Activated CD8-positive, alpha-beta T cell treated with anti-CD3 and anti-CD28 coated beads for 36 hours (primary cell): ENCODE measurements at regions of chr12 and their contacts with region 1.

Region 1: DNA sequence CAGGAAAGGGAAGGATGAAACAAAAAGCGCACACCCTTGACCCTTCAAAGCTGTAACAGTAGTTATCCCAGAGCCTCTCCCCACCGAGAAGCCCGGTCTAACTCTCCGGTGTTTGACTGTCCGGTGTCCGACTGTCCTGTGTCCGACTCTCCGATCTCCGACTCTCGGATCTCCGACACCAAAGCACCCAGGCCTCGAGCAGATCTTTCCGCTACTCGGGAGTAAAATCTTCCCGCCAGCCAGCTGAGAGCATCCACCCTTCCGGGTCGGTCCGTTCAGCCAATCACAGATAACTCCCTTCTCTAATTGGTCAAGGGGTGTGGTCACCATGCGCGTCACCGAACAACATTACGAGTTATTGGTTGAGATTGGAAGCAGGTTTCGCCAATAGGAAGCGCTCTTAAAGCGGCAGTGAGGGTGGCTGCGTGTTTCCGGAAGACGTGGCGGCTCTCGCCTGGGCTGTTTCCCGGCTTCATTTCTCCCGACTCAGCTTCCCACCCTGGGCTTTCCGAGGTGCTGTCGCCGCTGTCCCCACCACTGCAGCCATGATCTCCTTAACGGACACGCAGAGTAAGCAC is at the starts of genes GOLT1B and RECQL:
- DNase-seq: peak; percentile 96
- ATAC-seq: peak; percentile 92
- H3K4me3 Mint-ChIP-seq: no peak within 1 kb of the TSS
- H3K27ac Mint-ChIP-seq: no peak within 1 kb of the TSS
- H3K4me1 Mint-ChIP-seq: peaks cover 57% of the 10 kb centered on the region
- H3K27me3 Mint-ChIP-seq: no peaks in the 10 kb centered on the region
- CTCF ChIP-seq: no peak
- total RNA-seq, gene GOLT1B: 31.6 to 35.9 TPM
- total RNA-seq, gene RECQL: 81.0 to 87.9 TPM

Region 2: GRCh38 chr12:21296751-21297406 is 204.6 kb before region 1 on chr12:
- CTCF ChIA-PET with region 1: no interaction called
- POLR2A ChIA-PET with region 1: no interaction called
- intact Hi-C with region 1: no loop called
- DNase-seq: peak; percentile 4
- ATAC-seq: peak; percentile 30
- H3K4me3 Mint-ChIP-seq: no peak overlapping the region
- H3K27ac Mint-ChIP-seq: no peak overlapping the region
- H3K4me1 Mint-ChIP-seq: peaks cover 2% of the 10 kb centered on the region
- H3K27me3 Mint-ChIP-seq: peaks cover 5% of the 10 kb centered on the region
- CTCF ChIP-seq: peak; percentile 89

Region 3: DNA sequence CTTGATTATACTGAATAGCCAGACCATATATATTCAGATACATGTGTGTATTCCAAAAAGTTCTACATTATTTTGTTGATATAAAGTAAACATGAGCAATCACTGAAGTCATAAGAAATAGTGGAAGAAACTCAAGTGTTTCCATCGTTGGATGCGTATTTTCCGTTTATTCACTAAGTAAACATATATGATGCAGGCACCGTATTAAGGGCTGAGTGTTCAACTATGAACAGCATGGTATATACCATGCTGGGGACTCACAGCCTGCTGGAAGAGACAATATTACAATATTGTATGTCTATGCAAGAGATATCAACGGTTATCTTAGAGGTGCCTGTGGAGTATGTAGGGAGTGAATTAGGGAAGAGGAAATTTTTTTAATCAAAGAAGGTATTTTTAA is 62.8 kb before region 1 on chr12:
- CTCF ChIA-PET with region 1: no interaction called
- POLR2A ChIA-PET with region 1: interaction called, 7 read pairs
- intact Hi-C with region 1: loop called (anchors 5 kb)
- DNase-seq: no peak
- ATAC-seq: no peak
- H3K4me3 Mint-ChIP-seq: peak overlapping the region; percentile 91
- H3K27ac Mint-ChIP-seq: peak overlapping the region; percentile 97
- H3K4me1 Mint-ChIP-seq: peaks cover 35% of the 10 kb centered on the region
- H3K27me3 Mint-ChIP-seq: no peaks in the 10 kb centered on the region
- CTCF ChIP-seq: no peak

Region 4: GRCh38 chr12:21451529-21451928 is 49.9 kb before region 1 on chr12:
- CTCF ChIA-PET with region 1: no interaction called
- POLR2A ChIA-PET with region 1: interaction called, 4 read pairs
- intact Hi-C with region 1: loop called (anchors 5 kb)
- DNase-seq: no peak
- ATAC-seq: no peak
- H3K4me3 Mint-ChIP-seq: no peak overlapping the region
- H3K27ac Mint-ChIP-seq: no peak overlapping the region
- H3K4me1 Mint-ChIP-seq: peaks cover 30% of the 10 kb centered on the region
- H3K27me3 Mint-ChIP-seq: no peaks in the 10 kb centered on the region
- CTCF ChIP-seq: no peak

Region 5: GRCh38 chr12:21527451-21528180 is 26.1 kb after region 1 on chr12:
- CTCF ChIA-PET with region 1: no interaction called
- POLR2A ChIA-PET with region 1: interaction called, 10 read pairs
- intact Hi-C with region 1: no loop called
- DNase-seq: peak; percentile 73
- ATAC-seq: peak; percentile 98
- H3K4me3 Mint-ChIP-seq: peak overlapping the region; percentile 70
- H3K27ac Mint-ChIP-seq: no peak overlapping the region
- H3K4me1 Mint-ChIP-seq: peaks cover 6% of the 10 kb centered on the region
- H3K27me3 Mint-ChIP-seq: peaks cover 29% of the 10 kb centered on the region
- CTCF ChIP-seq: no peak

Region 6: GRCh38 chr12:21657326-21658077 is 156.0 kb after region 1 on chr12 and contains the start of gene LDHB:
- CTCF ChIA-PET with region 1: no interaction called
- POLR2A ChIA-PET with region 1: interaction called, 22 read pairs
- intact Hi-C with region 1: loop called (anchors 5 kb)
- DNase-seq: peak; percentile 99
- ATAC-seq: peak; percentile 97
- H3K4me3 Mint-ChIP-seq: peak within 1 kb of the TSS; percentile 81
- H3K27ac Mint-ChIP-seq: peak within 1 kb of the TSS; percentile 98
- H3K4me1 Mint-ChIP-seq: peaks cover 41% of the 10 kb centered on the region
- H3K27me3 Mint-ChIP-seq: no peaks in the 10 kb centered on the region
- CTCF ChIP-seq: no peak
- total RNA-seq, gene LDHB: 2,161 to 2,384 TPM